Endothelial cell of umbilical vein (primary cell): ENCODE measurements at regions of chr3 and their contacts with region 1.

Region 1: DNA sequence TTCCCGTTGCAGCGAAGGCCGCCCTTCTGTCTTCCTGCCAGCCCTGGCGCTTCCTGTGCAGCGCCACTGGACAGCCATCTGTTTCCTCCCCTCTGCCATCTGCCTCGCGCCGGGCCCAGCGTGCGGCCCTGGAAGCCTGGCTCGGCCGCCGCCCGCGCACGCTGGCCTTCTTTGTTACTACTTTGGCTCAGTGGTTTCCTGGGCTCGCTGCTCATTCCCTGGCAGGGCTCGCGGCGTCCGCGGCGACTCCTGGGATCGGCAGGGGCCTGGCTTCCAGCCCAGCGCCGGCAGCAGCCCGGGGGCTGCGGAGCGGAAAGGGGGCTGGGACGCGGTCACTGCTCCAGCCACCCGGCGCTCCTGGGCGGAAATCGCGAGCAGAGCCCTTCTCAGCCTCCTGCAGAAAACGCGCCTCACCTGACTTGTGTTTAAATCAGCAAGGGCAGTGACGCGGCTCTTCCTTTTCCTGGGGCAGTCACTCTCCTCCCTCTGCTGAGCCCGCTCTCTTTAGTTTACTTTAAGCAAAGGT is 10.0 kb downstream of the CMTM7 start:
- DNase-seq: peak; percentile 96
- H3K4me3 ChIP-seq: peak overlapping the region in 2 of 3 experiments; percentile 9 to 47
- H3K27ac ChIP-seq: peak overlapping the region; percentile 89
- H3K4me1 ChIP-seq: peaks cover 34% of the 10 kb centered on the region
- H3K27me3 ChIP-seq: no peaks in the 10 kb centered on the region
- CTCF ChIP-seq: no peak
- POLR2A ChIP-seq: peak; percentile 64

Region 2: DNA sequence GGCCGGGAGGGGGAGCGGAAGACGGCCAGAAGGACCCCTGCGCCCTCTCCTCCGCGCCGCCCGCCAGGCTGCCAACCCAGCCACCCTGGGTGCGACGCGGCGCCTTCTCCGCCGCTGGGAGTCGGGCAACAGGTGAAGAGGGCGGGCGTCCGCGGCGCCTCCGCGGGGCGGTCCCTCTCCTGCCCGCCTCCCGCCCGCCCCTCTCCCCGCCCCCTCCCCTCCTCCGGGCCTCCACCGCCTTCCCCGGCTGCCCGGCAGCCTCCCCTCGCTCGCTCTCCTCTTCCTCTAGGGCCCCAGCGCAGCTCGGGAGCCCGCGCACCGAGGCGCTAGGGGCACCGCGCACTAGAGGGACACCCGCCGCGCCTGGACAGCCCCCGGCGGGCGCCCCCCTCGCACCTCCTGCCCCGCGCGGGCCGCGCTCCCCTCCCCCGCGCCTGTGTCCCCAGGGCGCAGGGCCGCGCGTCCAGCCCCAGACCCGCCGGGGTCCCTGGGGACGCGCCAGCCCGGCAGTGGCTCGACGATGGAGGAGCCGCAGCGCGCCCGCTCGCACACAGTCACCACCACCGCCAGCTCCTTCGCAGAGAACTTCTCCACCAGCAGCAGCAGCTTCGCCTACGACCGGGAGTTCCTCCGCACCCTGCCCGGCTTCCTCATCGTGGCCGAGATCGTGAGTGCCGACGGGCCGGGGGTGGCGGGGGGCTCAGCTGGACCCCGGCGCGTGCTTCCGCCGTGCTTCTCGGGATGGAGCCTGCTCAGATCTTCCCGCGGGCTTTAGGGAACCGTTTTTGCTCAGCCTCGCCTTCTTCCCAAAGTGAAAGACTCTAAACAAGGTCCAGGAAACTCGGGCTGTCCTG is 162.9 kb before region 1 on chr3 and contains the start of gene CMTM8:
- CTCF ChIA-PET with region 1: no interaction called
- POLR2A ChIA-PET with region 1: no interaction called
- dilution Hi-C with region 1: no loop called
- intact Hi-C with region 1: loop called (anchors 5 kb)
- DNase-seq: peak; percentile 51
- H3K4me3 ChIP-seq: peak within 1 kb of the TSS; percentile 67 to 78 (median 70)
- H3K27ac ChIP-seq: no peak within 1 kb of the TSS
- H3K4me1 ChIP-seq: peaks cover 15% of the 10 kb centered on the region
- H3K27me3 ChIP-seq: no peaks in the 10 kb centered on the region
- CTCF ChIP-seq: no peak
- POLR2A ChIP-seq: no peak
- total RNA-seq, gene CMTM8: 7.3 and 8.1 TPM in 2 replicates

Region 3: GRCh38 chr3:32340039-32340438 is 61.6 kb before region 1 on chr3:
- CTCF ChIA-PET with region 1: no interaction called
- POLR2A ChIA-PET with region 1: no interaction called
- dilution Hi-C with region 1: no loop called
- intact Hi-C with region 1: loop called (anchors 2 kb)
- DNase-seq: peak; percentile 36
- H3K4me3 ChIP-seq: no peak overlapping the region
- H3K27ac ChIP-seq: no peak overlapping the region
- H3K4me1 ChIP-seq: peaks cover 6% of the 10 kb centered on the region
- H3K27me3 ChIP-seq: no peaks in the 10 kb centered on the region
- CTCF ChIP-seq: peak; percentile 33 to 34
- POLR2A ChIP-seq: no peak

Region 4: DNA sequence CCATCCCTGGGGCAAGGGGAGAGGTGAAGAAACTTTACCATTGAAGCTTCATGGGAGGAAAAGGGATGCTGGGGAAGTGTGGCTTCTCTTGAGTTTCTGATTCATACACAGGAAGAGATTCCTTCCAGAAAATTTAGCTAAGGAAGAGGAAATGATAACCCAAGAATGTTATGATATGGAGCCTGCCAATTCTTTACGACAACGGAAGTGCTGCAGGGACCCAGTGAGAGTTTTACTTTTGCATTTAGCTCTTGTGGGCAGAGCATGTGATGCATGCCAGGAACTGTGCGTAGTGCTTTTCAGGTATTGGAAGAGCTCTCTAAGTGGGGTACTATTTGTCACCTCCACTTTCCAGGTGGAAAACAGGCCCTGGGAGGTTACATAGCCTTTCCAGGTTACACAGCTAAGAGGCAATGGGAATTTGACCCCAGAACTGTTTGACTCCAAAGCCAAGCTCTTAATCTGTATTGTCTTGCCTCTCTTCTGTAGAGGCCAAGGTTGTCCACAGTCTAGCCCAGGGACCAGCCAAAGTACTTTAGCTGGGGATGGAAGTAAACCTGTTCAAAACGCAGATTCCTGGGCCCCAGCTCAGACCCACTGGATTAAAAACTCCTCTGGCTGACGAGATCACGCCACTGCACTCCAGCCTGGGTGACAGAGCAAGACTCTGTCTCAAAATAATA is 13.0 kb after region 1 on chr3:
- CTCF ChIA-PET with region 1: interaction called, 7 read pairs
- POLR2A ChIA-PET with region 1: interaction called, 3 read pairs
- dilution Hi-C with region 1: no loop called
- intact Hi-C with region 1: loop called (anchors 1 kb)
- DNase-seq: peak; percentile 94
- H3K4me3 ChIP-seq: no peak overlapping the region
- H3K27ac ChIP-seq: peak overlapping the region; percentile 89
- H3K4me1 ChIP-seq: peaks cover 52% of the 10 kb centered on the region
- H3K27me3 ChIP-seq: no peaks in the 10 kb centered on the region
- CTCF ChIP-seq: no peak
- POLR2A ChIP-seq: no peak

Region 5: GRCh38 chr3:32443478-32443877 is 41.9 kb after region 1 on chr3:
- CTCF ChIA-PET with region 1: no interaction called
- POLR2A ChIA-PET with region 1: no interaction called
- dilution Hi-C with region 1: no loop called
- intact Hi-C with region 1: loop called (anchors 1 kb)
- DNase-seq: peak; percentile 96
- H3K4me3 ChIP-seq: no peak overlapping the region
- H3K27ac ChIP-seq: peak overlapping the region; percentile 60
- H3K4me1 ChIP-seq: peaks cover 22% of the 10 kb centered on the region
- H3K27me3 ChIP-seq: no peaks in the 10 kb centered on the region
- CTCF ChIP-seq: no peak
- POLR2A ChIP-seq: no peak